ENCODE measurements at regions of chr7 and their contacts with region 1.

Region 1: DNA sequence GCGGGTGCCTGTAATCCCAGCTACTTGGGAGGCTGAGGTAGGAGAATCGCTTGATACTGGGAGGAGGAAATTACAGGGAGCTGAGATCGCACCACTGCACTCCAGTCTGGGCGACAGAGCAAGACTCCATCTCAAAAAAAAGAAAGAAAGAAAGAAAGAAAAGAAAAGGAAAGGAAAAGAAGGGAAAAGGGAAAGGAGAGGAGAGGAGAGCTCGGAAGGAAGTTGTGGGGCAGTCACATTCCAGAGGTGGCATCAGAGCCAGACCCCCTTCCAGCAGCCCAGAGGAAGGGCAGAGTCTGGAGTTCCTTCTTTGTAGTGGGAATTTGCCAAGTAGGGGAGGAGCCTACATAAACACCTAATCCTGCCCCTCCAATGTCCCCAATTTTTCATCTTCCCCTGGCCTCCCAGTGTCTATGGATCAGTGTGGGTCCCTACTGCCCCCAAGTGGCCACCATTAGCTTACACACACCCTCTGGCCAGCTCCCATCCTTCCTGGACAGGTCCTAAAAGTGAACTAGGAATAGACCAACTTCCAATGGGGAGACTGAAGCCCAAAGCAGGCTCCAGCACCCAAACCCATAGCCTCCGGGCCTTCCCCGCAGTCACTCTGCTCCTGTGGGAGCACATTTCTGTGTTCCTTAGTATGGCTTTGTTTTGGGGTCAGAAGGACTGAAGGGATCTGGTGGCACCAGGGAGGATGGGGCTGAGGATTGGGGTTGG is 39.6 kb upstream of the HSPB1 start:
- DNase-seq: peak; percentile 82

Region 2: DNA sequence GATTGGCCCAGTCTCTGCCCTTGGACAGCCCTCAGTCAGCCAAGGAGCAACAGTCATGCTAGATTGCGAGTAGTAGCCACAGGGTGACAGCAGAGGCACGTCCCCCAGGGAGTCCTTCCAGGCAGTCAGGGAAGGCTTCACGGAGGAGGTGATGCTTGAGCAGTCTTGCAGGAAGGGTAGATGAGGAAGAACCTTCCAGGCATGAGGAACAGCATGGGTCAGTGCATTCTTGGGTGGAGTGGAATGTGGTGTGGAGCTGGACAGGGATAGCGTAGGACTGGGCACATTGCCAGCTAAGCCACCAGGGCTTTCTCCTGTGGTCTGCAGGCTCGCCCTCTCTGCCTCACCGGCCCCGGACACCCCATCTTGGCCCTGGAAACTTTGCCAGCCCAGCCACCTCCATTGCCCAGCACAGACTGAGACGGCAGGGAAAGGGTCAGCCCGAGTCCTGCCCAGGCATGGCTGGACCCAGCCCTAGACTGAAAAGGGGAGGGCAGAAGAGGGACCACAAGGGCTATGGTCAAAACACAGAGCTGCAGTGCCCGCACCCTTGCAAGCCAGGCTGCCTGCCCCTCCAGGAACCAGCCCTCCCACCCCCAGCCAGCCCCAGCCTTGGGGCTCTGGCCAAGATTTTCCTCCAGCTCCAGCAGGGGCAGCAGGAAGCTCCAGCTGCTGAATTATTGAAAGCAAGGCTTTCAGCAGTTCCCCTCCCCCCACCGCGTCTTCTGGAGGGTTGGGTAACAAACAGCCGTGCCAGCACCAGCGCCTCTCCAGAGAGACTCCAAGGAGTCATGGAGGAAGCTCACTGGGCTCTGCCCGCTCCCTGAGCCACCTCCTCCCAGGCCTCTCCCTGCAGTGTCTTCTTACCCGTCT is 42.4 kb before region 1 on chr7:
- in situ Hi-C with region 1: loop called (anchors 5 kb)
- DNase-seq: peak; percentile 99

Region 3: GRCh38 chr7:76314042-76314721 is 51.3 kb after region 1 on chr7:
- in situ Hi-C with region 1: no loop called
- DNase-seq: peak; percentile 97